PC-9 (cell line): ENCODE measurements at regions of chr2 and their contacts with region 1.

Region 1: DNA sequence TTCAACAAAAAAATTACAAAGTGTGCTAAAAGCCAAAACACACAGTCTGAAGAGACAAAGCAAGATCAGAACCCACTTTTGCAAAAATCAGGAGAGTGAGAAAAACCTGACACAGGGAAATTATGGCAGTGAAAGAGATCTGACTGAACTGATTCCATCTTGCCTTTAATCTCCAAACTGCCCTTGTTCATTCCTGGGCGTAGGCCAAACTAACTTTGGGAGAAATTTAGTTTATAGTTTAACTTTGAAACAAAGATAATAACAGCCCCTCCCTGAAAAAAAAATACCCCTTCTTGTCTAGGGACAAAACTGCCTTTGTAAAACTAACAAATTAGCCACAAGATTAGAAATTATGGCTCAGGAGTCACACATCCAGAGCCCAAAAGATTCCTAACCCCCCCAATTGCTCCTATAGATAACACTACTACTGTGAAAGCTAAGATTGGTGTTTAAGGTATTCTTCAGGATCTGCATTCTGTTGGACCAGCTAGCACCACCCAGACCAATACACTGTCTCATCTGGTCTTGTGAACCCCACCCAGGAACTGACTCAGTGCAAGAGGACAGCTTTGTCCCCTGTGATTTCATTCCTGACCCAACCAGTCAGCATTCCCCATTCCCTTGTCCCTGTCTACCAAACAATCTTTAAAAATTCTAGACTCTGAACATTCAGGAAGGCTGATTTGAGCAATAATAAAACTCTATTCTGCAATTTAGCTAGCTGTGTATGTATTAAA is 226.1 kb upstream of the SH3BP4 start:
- DNase-seq: no peak
- H3K4me3 ChIP-seq: no peak overlapping the region
- H3K27ac ChIP-seq: peak overlapping the region; percentile 28
- H3K4me1 ChIP-seq: peaks cover 20% of the 10 kb centered on the region
- H3K27me3 ChIP-seq: no peaks in the 10 kb centered on the region
- CTCF ChIP-seq: no peak

Region 2: DNA sequence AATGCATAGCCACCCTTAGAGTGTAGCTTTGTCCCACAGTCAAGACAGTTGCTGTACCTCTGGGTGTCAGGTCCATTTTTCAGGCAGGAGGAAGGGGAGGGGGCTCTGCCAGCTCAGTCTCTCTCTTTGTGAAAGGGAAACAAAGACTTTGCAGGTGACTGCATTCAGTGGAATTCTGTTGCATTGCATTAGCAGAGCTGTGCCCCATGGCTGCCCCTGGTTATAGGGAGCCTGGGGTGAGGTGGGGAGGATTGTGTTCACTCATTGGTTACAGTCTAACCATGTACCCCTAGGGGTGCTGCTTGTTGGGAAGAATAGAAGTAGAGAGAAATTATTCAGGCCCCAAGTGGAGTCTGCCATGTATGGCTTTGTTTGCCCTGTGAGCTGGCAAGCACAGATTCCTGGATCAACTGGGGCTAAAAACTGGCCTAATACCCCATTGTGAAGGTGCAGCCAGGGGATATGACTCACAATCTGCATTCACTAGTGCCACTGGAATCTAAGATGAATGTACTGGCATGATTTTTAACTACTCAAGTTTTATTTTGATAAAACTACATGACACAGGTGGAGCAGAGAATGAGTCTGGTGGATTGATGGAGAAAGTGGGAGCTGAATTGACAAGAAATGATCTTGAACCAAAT is 344.5 kb after region 1 on chr2:
- CTCF ChIA-PET with region 1: interaction called, 17 read pairs
- POLR2A ChIA-PET with region 1: no interaction called
- intact Hi-C with region 1: no loop called
- DNase-seq: peak; percentile 72 to 84
- H3K4me3 ChIP-seq: no peak overlapping the region
- H3K27ac ChIP-seq: peak overlapping the region; percentile 16
- H3K4me1 ChIP-seq: peaks cover 16% of the 10 kb centered on the region
- H3K27me3 ChIP-seq: no peaks in the 10 kb centered on the region
- CTCF ChIP-seq: no peak